ENCODE measurements at regions of chr20 and their contacts with region 1.

Region 1: GRCh38 chr20:50460460-50461267 is 49.5 kb upstream of the PTPN1 start:
- DNase-seq: peak; percentile 86
- ATAC-seq: peak; percentile 82
- H3K4me3 Mint-ChIP-seq: no peak overlapping the region
- H3K27ac Mint-ChIP-seq: peak overlapping the region; percentile 39
- H3K4me1 Mint-ChIP-seq: peaks cover 41% of the 10 kb centered on the region
- H3K27me3 Mint-ChIP-seq: peaks cover 19% of the 10 kb centered on the region

Region 2: GRCh38 chr20:50179507-50180016 is 281.1 kb before region 1 on chr20:
- CTCF ChIA-PET with region 1: interaction called, 144 read pairs
- POLR2A ChIA-PET with region 1: no interaction called
- DNase-seq: no peak
- ATAC-seq: no peak
- H3K4me3 Mint-ChIP-seq: no peak overlapping the region
- H3K27ac Mint-ChIP-seq: no peak overlapping the region
- H3K4me1 Mint-ChIP-seq: no peaks in the 10 kb centered on the region
- H3K27me3 Mint-ChIP-seq: peaks cover 15% of the 10 kb centered on the region

Region 3: DNA sequence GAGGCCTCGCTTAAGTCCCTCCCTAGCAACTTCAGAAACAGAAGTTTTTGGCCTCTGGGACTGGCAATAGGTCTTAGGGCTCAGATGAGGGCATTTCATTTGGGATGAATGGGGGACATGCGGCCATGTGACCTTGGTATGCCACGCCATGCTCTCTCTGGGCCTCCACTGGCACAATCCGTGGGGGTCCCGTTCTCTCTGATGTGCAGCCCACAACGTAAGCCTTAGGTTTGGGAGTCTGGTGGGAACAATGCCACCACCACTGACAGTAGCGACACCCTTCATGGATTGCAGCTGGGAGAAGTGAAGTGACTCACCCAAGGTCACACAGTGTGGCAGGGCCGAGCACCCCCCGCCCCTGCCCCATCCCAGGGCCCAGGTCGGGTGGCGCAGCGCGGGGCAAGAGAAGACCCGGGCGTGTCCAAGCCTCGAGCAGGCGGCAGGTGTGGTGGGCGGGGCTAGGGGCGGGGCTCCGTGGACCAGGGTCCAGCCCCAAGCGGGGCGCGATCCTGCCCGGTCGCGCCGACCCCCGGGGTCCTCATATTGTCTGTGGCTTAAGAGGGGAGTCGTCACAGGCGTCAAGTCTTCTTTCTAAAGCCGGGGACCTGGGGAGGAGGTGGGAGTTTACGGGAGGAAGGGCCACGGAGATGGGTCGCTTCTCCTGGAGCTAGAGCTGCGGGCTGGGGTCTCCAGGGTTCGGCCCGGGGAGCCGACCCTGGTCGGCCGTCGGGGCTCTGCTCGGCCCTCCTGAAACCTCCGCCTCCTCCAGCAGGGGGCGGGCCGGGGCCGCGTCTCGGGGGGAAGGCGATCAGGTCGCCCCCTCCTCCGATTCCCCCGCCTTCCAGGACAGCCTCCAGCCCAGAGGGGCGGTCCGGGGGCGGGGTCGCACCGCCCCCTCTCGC is 270.7 kb before region 1 on chr20:
- CTCF ChIA-PET with region 1: interaction called, 144 read pairs
- POLR2A ChIA-PET with region 1: interaction called, 3 read pairs
- DNase-seq: peak; percentile 89
- ATAC-seq: peak; percentile 54
- H3K4me3 Mint-ChIP-seq: peak overlapping the region; percentile 53
- H3K27ac Mint-ChIP-seq: peak overlapping the region; percentile 43
- H3K4me1 Mint-ChIP-seq: peaks cover 26% of the 10 kb centered on the region
- H3K27me3 Mint-ChIP-seq: peaks cover 11% of the 10 kb centered on the region

Region 4: DNA sequence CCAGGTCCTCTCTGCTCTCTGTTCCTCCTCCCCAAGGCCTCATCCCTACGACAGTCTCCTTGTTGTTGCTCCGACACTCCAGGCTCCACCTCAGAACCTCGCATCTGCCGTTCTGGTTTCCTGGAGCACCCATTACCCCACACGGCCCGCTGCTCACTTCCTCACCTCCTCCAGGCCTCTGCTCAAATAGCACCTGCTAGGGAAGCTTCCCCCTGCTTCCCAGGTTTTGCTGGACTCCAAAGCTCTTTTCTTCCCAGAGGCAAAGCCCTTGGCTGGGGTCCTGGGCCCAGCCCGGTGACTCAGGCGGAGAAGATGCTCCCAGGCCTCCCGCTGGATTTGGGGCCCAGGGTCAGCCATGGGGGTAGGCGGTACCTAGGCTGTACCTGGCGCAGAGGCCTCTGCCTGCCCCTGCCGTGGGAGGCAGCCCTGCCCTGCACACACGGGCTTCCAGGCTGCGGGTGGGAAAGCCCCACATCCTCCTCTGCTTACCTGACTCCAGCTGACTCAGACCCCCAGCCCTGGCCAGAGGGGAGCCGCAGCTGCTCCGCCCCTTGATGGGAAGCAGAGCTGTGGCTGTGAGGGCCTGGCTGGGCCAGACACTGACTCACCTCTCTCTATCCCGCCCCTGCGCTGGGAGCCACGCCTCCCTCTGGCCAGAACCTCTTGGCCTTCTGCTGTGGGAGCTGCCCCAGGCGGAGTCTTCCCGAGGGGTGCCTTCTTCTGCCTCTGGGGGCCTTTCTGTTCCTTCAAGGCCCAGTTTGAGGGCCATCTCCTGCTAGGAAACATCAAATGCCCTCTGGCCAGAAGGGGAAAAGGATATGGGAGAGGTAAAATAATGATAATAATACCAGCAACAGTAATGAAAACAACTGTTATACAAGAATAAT is 139.5 kb before region 1 on chr20:
- CTCF ChIA-PET with region 1: no interaction called
- POLR2A ChIA-PET with region 1: no interaction called
- DNase-seq: no peak
- ATAC-seq: no peak
- H3K4me3 Mint-ChIP-seq: no peak overlapping the region
- H3K27ac Mint-ChIP-seq: no peak overlapping the region
- H3K4me1 Mint-ChIP-seq: peaks cover 3% of the 10 kb centered on the region
- H3K27me3 Mint-ChIP-seq: peaks cover 24% of the 10 kb centered on the region

Region 5: DNA sequence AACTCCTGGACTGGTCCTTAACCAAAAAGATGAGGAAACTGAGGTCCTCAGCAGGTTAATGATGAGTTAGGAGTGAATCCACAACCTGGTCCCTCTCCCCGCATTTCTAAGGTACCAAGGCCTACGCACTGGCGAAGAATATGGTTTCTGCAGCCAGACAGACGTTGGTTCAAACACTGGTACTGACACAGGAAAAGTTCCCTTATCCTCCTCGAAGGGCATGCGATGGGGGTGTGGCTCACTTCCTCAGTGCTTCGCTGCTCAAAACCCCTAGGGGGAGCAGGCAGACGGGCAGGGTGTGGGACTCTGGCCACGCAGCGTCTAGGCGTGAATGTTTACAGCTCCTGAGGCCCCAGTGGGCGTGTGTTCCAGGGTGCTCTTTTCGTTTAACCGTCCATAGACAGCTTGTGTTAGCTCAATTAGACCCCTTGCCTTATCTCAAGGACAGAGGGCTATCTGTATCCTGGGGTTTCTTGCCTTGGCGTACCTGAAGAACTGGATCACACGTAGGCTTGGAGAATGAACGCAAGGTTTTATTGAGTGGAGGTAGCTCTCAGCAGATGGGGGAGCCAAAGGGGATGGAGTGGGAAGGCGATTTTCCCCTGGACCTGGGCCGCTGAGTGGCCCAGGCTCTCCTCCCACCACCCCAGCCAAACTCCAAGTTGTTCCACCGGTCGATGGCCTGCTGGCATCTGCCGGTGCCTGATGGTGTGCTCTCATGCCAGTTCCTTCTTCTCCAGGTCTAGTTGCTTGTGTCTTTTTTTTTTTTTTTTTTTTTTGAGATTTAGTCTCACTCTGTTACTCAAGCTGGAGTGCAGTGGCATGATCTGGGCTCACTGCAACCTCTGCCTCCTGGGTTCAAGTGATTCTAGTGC is 17.7 kb after region 1 on chr20:
- CTCF ChIA-PET with region 1: interaction called, 25 read pairs
- POLR2A ChIA-PET with region 1: no interaction called
- DNase-seq: peak; percentile 86
- ATAC-seq: peak; percentile 100
- H3K4me3 Mint-ChIP-seq: no peak overlapping the region
- H3K27ac Mint-ChIP-seq: no peak overlapping the region
- H3K4me1 Mint-ChIP-seq: peaks cover 36% of the 10 kb centered on the region
- H3K27me3 Mint-ChIP-seq: peaks cover 2% of the 10 kb centered on the region

Region 6: GRCh38 chr20:50484276-50484976 is 23.8 kb after region 1 on chr20:
- CTCF ChIA-PET with region 1: interaction called, 14 read pairs
- POLR2A ChIA-PET with region 1: no interaction called
- DNase-seq: no peak
- ATAC-seq: no peak
- H3K4me3 Mint-ChIP-seq: peak overlapping the region; percentile 81
- H3K27ac Mint-ChIP-seq: peak overlapping the region; percentile 94
- H3K4me1 Mint-ChIP-seq: peaks cover 46% of the 10 kb centered on the region
- H3K27me3 Mint-ChIP-seq: no peaks in the 10 kb centered on the region

Region 7: GRCh38 chr20:50588034-50588611 is 127.5 kb after region 1 on chr20:
- CTCF ChIA-PET with region 1: interaction called, 10 read pairs
- POLR2A ChIA-PET with region 1: no interaction called
- DNase-seq: peak; percentile 80
- ATAC-seq: peak; percentile 69
- H3K4me3 Mint-ChIP-seq: no peak overlapping the region
- H3K27ac Mint-ChIP-seq: no peak overlapping the region
- H3K4me1 Mint-ChIP-seq: peaks cover 3% of the 10 kb centered on the region
- H3K27me3 Mint-ChIP-seq: no peaks in the 10 kb centered on the region

Region 8: GRCh38 chr20:50713657-50714101 is 253.0 kb after region 1 on chr20:
- CTCF ChIA-PET with region 1: no interaction called
- POLR2A ChIA-PET with region 1: no interaction called
- DNase-seq: no peak
- ATAC-seq: no peak
- H3K4me3 Mint-ChIP-seq: no peak overlapping the region
- H3K27ac Mint-ChIP-seq: no peak overlapping the region
- H3K4me1 Mint-ChIP-seq: no peaks in the 10 kb centered on the region
- H3K27me3 Mint-ChIP-seq: peaks cover 25% of the 10 kb centered on the region

Measured in activated CD8-positive, alpha-beta T cell treated with anti-CD3 and anti-CD28 coated beads, Interleukin-2, amount 10 ng/mL, durations not matched to agents 7 days and 5 days (primary cell).